ENCODE measurements at regions of chr5 and their contacts with region 1.

Region 1: GRCh38 chr5:68962757-68963484 is 130.9 kb upstream of the SLC30A5 start:
- H3K4me3 Mint-ChIP-seq: no peak overlapping the region
- H3K27ac Mint-ChIP-seq: no peak overlapping the region
- H3K4me1 Mint-ChIP-seq: peaks cover 5% of the 10 kb centered on the region
- H3K27me3 Mint-ChIP-seq: no peaks in the 10 kb centered on the region

Region 2: GRCh38 chr5:68460147-68460798 is 502.6 kb before region 1 on chr5:
- intact Hi-C with region 1: loop called (anchors 10 kb)
- H3K4me3 Mint-ChIP-seq: no peak overlapping the region
- H3K27ac Mint-ChIP-seq: no peak overlapping the region
- H3K4me1 Mint-ChIP-seq: no peaks in the 10 kb centered on the region
- H3K27me3 Mint-ChIP-seq: no peaks in the 10 kb centered on the region

Region 3: DNA sequence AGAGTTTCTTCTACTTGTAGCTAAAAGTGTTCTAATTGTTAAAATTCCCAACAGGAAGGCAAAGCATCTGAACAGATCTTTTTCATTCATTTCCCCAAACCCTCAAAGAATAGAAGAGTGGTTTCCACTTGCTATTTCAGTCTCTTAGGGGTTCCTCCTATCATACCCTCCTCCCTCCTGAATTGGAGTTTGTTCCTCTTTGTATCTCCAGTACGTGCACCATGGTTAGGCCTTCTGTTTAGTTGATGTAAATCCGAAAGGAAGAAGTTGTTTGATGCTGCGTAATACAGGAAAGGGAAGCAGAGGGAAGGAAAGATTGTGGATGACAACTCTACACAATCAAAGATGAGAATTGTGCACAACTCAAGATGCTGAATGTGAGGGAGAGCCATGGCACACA is 443.8 kb before region 1 on chr5:
- intact Hi-C with region 1: no loop called
- H3K4me3 Mint-ChIP-seq: no peak overlapping the region
- H3K27ac Mint-ChIP-seq: no peak overlapping the region
- H3K4me1 Mint-ChIP-seq: peaks cover 23% of the 10 kb centered on the region
- H3K27me3 Mint-ChIP-seq: no peaks in the 10 kb centered on the region

Measured in dendritic cell treated with granulocyte-macrophage colony-stimulating factor and Interleukin-4, amounts not matched to agents 40 ng/mL and 50 ng/mL, for 4 days (primary cell).